AG04449 (cell line): ENCODE measurements at regions of chr13 and their contacts with region 1.

Region 1: DNA sequence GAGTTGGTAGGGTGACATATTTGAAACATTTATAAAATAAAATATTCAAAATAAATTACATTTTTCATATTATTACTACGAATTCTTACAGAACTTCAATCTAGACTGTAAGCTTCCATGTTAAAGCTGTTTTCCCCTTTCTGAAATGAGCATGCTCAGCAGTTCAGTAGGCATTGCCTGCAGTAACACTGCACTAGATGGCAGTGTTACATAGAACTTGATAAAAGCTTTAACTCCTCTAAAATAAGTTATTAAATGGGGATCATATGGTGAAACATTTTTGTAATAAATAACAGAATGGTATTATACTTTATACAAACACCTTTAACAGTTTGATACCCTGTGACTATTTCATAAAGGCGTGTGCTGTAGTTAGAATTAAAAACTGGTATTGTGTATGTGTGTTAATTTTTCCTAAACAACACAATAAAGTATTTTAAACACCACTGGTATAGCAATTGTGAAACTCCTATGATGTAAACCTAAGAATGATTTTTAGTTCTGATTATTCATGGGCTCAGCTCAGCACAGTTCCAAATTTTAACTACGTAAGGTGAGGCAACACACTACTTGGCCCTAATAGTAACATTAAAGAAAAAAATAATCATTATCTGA is 11.6 kb upstream of the GPR18 start:
- DNase-seq: no peak
- H3K4me3 ChIP-seq: no peak overlapping the region
- CTCF ChIP-seq: peak; percentile 69

Region 2: GRCh38 chr13:99103536-99103935 is 166.2 kb before region 1 on chr13:
- CTCF ChIA-PET with region 1: no interaction called
- POLR2A ChIA-PET with region 1: no interaction called
- DNase-seq: no peak
- H3K4me3 ChIP-seq: no peak overlapping the region
- CTCF ChIP-seq: no peak

Region 3: GRCh38 chr13:99176309-99177276 is 93.1 kb before region 1 on chr13:
- CTCF ChIA-PET with region 1: interaction called, 395 read pairs
- POLR2A ChIA-PET with region 1: no interaction called
- DNase-seq: no peak
- H3K4me3 ChIP-seq: no peak overlapping the region
- CTCF ChIP-seq: peak; percentile 88

Region 4: DNA sequence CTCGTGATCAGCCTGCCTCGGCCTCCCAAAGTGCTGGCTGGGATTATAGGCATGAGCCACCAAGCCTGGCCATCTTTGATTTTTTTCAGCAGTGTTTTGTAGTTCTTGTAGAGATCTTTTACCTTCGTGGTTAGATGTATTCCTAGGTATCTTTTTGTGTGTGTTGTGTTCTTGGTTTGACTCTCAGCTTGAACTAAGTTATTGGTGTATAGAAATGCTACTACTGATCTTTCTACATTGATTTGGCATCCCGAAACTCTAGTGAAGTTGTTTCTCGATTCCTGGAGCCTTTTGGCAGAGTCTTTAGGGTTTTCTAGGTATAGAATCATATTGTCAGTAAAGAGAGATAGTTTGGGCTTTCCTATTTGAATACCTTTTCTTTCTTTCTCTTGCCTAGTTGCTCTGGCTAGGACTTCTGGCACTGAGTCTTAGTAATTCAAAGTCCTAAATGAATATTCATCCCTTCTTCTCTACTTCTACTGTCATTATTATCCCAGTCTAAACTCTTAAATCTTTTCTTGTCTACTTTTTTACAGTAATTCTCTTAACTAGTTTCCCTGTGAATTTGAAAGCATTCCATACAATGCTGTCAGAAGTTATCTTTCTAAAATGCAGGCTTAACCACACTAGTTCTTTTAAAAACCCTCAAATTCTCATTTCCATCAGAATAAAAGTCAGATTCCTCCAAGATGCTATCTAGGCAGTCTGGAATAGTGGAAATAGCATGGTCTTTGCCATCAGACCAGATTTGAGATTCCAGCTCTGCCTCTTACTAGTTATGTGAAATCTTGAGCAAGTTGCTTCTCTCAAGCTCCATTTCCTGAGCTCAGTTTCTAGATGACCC is 18.5 kb before region 1 on chr13:
- CTCF ChIA-PET with region 1: interaction called, 76 read pairs
- POLR2A ChIA-PET with region 1: no interaction called
- DNase-seq: no peak
- H3K4me3 ChIP-seq: no peak overlapping the region
- CTCF ChIP-seq: no peak

Region 5: GRCh38 chr13:99288089-99288488 is 18.4 kb after region 1 on chr13:
- CTCF ChIA-PET with region 1: interaction called, 17 read pairs
- POLR2A ChIA-PET with region 1: no interaction called
- DNase-seq: no peak
- H3K4me3 ChIP-seq: no peak overlapping the region
- CTCF ChIP-seq: no peak

Region 6: GRCh38 chr13:99386911-99387788 is 117.4 kb after region 1 on chr13:
- CTCF ChIA-PET with region 1: interaction called, 12 read pairs
- POLR2A ChIA-PET with region 1: no interaction called
- DNase-seq: no peak
- H3K4me3 ChIP-seq: no peak overlapping the region
- CTCF ChIP-seq: peak; percentile 37

Region 7: DNA sequence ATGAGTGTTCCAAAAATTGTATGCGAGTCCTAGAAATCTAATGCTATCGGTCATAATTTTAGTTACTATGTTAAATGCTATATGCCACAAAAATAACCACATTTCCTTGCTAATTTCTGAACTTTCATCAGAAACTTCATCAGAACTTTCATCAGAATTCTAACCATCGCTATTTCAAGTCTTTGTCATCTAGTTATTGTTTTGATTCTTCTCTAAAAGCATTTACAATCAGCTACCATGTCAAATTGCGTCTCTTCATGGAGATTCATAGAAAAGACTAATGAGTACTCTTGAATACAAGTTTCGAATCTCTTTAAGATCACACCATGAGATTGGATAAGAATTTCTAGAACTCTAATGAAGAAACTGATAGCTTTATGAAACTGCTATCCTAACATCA is 178.8 kb after region 1 on chr13:
- CTCF ChIA-PET with region 1: interaction called, 19 read pairs
- POLR2A ChIA-PET with region 1: no interaction called
- DNase-seq: no peak
- H3K4me3 ChIP-seq: no peak overlapping the region
- CTCF ChIP-seq: no peak

Region 8: DNA sequence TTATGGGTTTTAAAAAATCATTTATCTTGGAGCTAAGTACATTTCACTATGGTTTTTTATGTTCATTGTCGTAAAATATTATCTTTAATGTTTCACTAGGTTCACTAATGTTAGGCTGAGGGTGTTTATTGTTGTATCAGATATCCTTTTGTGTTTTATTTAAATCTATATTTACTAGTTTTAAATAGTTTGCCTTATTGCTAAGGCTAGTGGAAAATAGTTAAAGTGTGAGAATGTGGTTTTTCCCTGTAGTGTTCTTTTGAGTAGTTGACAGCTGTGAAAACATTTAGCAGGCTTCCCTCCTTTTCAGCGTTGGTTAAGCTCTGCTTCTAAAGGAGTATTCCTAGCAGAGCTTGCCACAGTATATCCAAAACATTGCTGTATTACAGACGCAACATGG is 370.5 kb after region 1 on chr13:
- CTCF ChIA-PET with region 1: no interaction called
- POLR2A ChIA-PET with region 1: no interaction called
- DNase-seq: no peak
- H3K4me3 ChIP-seq: no peak overlapping the region
- CTCF ChIP-seq: no peak